Psoas muscle (tissue), 8 donors: ENCODE measurements at regions of chr18 and their contacts with region 1.

Region 1: DNA sequence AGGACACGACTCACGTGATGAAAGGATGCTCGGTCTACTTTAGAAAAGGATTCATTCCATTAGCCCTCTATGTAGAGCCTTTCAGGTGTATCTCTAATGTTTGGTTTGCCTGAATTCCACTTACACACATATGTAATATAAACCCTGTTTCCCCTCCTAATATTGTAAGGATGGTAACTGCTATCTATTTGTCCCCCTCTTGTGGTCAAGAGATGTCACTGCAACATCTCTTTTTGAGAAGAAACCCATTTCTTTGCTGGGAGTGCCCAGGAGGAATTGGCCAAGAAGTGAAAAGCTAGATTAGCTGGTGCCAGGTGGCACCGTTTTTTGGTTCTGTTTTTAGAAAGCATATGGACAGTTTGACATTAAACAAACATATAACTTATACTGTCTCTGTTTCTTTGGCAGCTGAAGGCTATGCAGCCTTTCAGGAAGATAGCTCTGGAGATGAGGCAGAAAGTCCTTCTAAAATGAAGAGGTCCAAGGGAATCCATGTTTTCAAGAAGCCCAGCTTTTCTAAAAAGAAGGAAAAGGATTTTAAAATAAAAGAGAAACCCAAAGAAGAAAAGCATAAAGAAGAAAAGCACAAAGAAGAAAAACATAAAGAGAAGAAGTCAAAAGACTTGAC is 41.2 kb downstream of the RALBP1 start:
- DNase-seq: no peak
- ATAC-seq: peak; percentile 35 to 73 (median 49)
- H3K4me3 ChIP-seq: no peak overlapping the region
- H3K27ac ChIP-seq: no peak overlapping the region
- H3K4me1 ChIP-seq: peaks cover 7% of the 10 kb centered on the region
- H3K27me3 ChIP-seq: no peaks in the 10 kb centered on the region
- CTCF ChIP-seq: peak; percentile 86

Region 2: DNA sequence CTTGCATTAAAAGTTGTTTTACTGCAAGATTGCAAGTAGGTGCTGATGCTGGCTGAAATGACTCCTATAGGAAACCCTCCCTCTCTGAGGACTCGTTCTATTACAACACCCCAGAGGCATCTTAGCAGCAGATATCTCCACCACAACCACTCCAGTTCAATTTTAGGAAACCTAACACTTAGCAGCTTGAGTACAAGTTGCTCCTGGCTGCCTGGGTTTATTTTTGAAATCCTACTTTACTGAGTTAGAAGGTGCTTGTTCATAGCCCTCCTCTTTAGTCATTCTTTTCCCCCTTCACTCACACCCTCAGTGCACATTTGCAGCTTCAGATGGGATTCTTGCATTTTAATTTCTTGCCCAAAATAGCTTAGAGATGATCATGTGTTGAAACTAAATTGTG is 699.7 kb before region 1 on chr18:
- intact Hi-C with region 1: no loop called
- DNase-seq: no peak
- ATAC-seq: peak; percentile 59 to 90 (median 83)
- H3K4me3 ChIP-seq: no peak overlapping the region
- H3K27ac ChIP-seq: no peak overlapping the region
- H3K4me1 ChIP-seq: no peaks in the 10 kb centered on the region
- H3K27me3 ChIP-seq: no peaks in the 10 kb centered on the region
- CTCF ChIP-seq: no peak

Region 3: DNA sequence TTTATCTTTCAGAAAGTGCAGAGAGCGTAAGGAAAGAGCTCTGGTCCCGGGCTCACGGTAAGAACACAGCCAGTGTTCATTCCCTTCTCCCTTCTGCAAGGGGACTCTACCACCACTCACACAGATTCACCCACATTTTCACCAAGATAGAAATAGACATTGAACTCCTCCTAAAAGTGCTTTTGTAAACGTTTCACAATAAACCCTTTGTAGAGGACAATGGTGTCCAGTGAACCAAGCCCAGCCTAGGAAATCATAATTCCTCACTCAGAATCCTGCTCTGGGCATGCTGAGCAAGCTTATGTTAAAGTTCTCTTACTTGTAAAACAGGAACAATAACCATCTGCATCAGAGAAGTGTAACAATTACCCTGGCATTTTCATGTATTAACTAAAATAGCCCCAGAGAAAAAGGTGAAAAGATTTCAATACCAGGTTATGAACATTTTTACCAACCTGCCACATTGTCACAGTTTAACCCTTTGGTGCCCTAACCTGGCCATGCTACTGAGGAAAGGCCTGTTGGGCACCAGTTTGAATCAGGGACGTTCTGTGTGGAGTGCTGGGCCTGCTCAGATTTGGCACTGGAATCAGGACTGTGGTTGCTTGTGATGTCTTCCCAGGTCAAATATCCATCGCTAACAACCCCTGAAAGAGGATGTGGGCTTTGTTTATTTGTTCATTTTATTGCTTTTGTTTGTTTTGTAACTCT is 436.6 kb before region 1 on chr18:
- intact Hi-C with region 1: loop called in 1 of 2 experiments (anchors 10 kb)
- DNase-seq: no peak
- ATAC-seq: no peak
- H3K4me3 ChIP-seq: no peak overlapping the region
- H3K27ac ChIP-seq: no peak overlapping the region
- H3K4me1 ChIP-seq: no peaks in the 10 kb centered on the region
- H3K27me3 ChIP-seq: no peaks in the 10 kb centered on the region
- CTCF ChIP-seq: no peak

Region 4: DNA sequence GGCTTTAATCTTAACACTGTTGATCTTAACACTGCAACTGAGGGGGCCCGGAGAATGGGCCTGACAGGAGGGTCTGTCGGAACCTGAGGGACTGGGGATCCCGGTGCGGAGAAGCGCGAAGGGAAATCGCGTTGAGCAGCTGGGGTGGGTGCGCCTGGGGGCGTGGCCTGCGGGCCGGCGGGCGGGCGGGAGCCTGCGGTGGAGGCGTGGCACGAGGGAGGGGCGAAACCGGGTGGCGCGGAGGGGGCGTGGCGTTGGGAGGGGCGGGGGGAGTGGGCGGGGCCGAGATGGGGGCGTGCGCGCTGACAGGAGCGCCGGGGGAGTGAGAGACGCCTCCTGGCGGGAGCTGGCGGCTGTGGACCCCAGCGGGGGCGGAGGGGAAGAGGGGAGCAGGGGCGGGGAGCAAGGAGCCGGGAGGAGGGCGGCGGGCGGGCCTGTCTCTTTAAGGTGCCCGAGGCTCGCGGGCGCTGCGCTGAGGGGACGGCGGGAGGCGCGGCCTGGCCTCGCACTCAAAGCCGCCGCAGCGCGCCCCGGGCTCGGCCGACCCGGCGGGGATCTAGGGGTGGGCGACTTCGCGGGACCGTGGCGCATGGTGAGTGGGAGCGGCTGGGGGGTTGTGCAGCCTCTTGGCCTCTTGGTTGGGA is 182.1 kb before region 1 on chr18 and contains the start of gene TWSG1:
- intact Hi-C with region 1: loop called in 1 of 2 experiments (anchors 5 kb)
- DNase-seq: peak; percentile 94 to 97
- ATAC-seq: peak; percentile 93 to 96 (median 96)
- H3K4me3 ChIP-seq: peak within 1 kb of the TSS; percentile 91
- H3K27ac ChIP-seq: peak within 1 kb of the TSS; percentile 80
- H3K4me1 ChIP-seq: peaks cover 11% of the 10 kb centered on the region
- H3K27me3 ChIP-seq: no peaks in the 10 kb centered on the region
- CTCF ChIP-seq: peak; percentile 36
- total RNA-seq, gene TWSG1: 6.2 to 8.5 (median 7.7) TPM

Region 5: DNA sequence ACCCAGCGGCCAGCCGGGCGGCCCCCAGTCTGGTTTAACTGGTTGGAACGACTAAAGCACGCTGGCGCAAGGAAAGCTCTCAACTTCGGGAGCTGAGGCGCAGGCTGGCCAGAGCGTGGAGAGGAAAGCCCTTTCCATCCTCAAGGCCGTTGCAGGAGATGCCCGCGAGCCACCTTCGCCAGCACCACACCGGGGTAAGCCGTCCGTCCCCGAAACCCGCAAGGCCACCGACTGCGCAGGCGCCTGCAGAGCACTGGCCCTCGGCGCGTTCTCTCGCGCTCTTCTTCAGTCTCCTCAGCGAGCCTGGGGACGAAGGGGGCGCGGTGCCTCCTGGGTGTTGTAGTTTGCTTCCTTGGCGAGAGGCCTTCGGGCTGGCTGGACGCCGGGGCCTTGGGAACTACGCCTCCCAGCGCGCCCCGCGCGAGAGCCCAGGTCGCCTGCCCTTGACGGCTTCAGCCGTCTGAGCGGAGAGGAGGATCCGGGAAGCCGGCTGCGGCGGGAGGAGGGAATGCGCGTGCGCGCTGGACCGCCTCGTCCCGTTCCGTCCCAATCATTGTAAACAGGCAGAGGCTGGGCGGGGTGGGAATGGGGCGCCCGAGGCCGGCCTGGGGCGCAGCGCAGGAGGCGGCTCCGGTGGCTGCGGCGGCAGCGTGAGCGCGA is 41.4 kb before region 1 on chr18 and contains the start of gene RALBP1:
- intact Hi-C with region 1: loop called in 1 of 2 experiments (anchors 5 kb)
- DNase-seq: peak; percentile 100
- ATAC-seq: peak; percentile 97 to 99 (median 98)
- H3K4me3 ChIP-seq: peak within 1 kb of the TSS; percentile 87
- H3K27ac ChIP-seq: peak within 1 kb of the TSS; percentile 87
- H3K4me1 ChIP-seq: peaks cover 6% of the 10 kb centered on the region
- H3K27me3 ChIP-seq: no peaks in the 10 kb centered on the region
- CTCF ChIP-seq: no peak
- total RNA-seq, gene RALBP1: 28.7 to 42.6 (median 39.6) TPM

Region 6: GRCh38 chr18:9743200-9744016 is 226.9 kb after region 1 on chr18:
- intact Hi-C with region 1: no loop called
- DNase-seq: peak; percentile 39 to 50
- ATAC-seq: peak in 3 of 4 donors; percentile 34 to 59 (median 48)
- H3K4me3 ChIP-seq: no peak overlapping the region
- H3K27ac ChIP-seq: no peak overlapping the region
- H3K4me1 ChIP-seq: peaks cover 4% of the 10 kb centered on the region
- H3K27me3 ChIP-seq: no peaks in the 10 kb centered on the region
- CTCF ChIP-seq: no peak

Region 7: GRCh38 chr18:9885170-9886004 is 368.8 kb after region 1 on chr18 and contains the start of gene TXNDC2:
- intact Hi-C with region 1: no loop called
- DNase-seq: no peak
- ATAC-seq: no peak
- H3K4me3 ChIP-seq: no peak within 1 kb of the TSS
- H3K27ac ChIP-seq: no peak within 1 kb of the TSS
- H3K4me1 ChIP-seq: no peaks in the 10 kb centered on the region
- H3K27me3 ChIP-seq: no peaks in the 10 kb centered on the region
- CTCF ChIP-seq: no peak
- total RNA-seq, gene TXNDC2: 0.19 TPM in 1 of 4 donors, not detected in the others

Region 8: DNA sequence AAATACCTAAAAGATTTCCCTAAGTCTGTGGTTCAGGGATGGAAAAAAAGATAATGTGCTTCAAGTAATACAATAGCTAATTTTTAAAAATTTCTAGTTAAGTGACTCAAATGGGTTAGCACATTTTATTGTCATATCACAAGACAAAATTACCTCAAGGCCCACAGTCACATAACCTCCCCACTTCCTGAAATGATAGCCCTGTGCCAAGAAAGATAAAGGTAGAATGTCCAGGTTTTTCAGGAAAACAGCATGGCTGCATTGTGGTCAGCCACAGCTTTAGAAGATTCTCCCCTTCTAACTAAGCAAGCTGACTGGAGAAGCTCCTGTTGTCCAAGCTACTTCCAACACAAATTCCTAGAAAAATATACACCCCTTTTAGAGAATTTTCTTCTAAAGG is 1965.7 kb after region 1 on chr18:
- intact Hi-C with region 1: loop called in 1 of 2 experiments (anchors 5 kb)
- DNase-seq: no peak
- ATAC-seq: no peak
- H3K4me3 ChIP-seq: no peak overlapping the region
- H3K27ac ChIP-seq: no peak overlapping the region
- H3K4me1 ChIP-seq: no peaks in the 10 kb centered on the region
- H3K27me3 ChIP-seq: no peaks in the 10 kb centered on the region
- CTCF ChIP-seq: no peak